ENCODE measurements at regions of chr4 and their contacts with region 1.

Region 1: DNA sequence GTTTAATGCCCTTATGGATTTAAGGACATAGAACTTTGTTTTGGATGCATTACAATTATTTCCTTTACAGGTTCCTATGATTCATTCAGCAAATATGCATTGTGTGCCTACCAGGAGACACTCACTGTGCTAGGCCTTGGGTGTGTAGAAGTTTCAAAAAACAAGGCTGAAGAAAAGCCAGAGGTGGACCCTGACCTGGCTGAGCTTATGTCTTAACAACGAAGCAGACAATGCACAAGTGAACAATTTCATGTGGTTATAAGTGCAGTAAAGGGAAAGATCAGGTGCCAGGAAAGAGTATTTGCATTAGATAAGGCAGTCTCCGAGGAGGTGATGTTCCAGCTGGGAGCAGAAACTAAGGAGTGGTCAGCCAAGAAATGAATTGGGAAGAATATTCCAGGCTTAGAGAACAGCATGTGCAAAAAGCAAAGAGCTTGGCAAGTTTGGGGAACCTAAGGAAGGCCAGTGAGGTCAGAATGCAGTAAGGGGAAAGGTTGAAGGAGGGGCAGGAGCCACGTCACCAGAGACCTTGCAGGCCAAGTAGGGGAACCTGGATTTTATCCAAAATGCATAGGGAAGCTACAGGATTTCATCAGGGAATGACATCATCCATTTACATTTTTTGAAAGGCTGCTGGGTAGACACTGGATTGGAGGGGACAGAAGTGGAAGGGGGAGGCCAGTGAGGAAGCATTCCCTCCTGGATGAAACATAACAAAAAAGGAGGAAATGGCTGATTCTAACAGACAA is 193.6 kb downstream of the SOWAHB start:
- DNase-seq: peak; percentile 88
- ATAC-seq: peak; percentile 81
- H3K4me3 ChIP-seq: peak overlapping the region; percentile 44; the same call in 1 of the 2 replicates
- H3K27ac ChIP-seq: peak overlapping the region; percentile 99
- H3K4me1 ChIP-seq: peaks cover 61% of the 10 kb centered on the region
- H3K27me3 ChIP-seq: no peaks in the 10 kb centered on the region
- CTCF ChIP-seq: no peak

Region 2: DNA sequence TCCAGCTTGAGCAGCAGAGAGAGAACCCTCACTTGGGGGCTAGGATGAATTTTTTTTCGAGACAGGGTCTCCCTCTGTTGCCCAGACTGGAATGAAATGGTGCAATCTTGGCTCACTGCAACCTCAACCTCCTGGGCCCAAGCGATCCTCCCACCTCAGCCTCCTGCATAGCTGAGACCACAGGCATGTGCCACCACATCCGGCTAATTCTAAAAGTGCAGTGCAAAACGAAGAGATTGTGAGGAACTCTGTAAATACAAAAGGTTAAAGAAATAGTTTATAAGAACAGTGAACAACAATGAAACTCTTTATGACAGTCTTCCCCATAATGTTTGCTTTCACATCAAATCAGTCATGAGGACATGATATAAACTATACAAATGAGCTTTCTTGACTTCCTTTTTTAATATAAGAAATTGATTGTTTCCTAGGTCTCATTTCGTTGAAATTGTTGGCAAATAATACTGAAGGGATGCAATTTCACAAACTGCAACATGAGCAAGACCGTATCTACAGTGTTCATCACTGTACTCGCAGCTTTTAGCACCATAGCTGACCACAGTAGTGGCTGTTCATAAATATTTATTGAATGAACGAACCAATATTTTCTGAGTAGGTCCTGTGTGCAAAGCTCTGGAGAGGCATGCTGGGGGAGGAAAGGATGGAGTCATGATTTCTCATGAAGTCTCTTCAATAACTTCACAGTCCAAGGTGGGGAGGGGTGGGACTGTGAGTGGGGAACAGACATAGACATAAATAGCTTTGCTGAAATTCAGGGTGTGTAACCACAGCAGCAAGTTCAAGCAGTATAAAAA is 153.1 kb before region 1 on chr4:
- CTCF ChIA-PET with region 1: interaction called, 3 read pairs
- POLR2A ChIA-PET with region 1: interaction called, 4 read pairs
- intact Hi-C with region 1: loop called (anchors 2 kb)
- DNase-seq: peak; percentile 70
- ATAC-seq: peak; percentile 61
- H3K4me3 ChIP-seq: no peak overlapping the region
- H3K27ac ChIP-seq: peak overlapping the region; percentile 69
- H3K4me1 ChIP-seq: peaks cover 23% of the 10 kb centered on the region
- H3K27me3 ChIP-seq: no peaks in the 10 kb centered on the region
- CTCF ChIP-seq: no peak

Region 3: GRCh38 chr4:76665139-76665538 is 39.2 kb before region 1 on chr4:
- CTCF ChIA-PET with region 1: no interaction called
- POLR2A ChIA-PET with region 1: interaction called, 4 read pairs
- intact Hi-C with region 1: loop called (anchors 1 kb)
- DNase-seq: peak; percentile 97
- ATAC-seq: peak; percentile 90
- H3K4me3 ChIP-seq: no peak overlapping the region
- H3K27ac ChIP-seq: peak overlapping the region; percentile 87
- H3K4me1 ChIP-seq: peaks cover 42% of the 10 kb centered on the region
- H3K27me3 ChIP-seq: no peaks in the 10 kb centered on the region
- CTCF ChIP-seq: no peak

Region 4: GRCh38 chr4:76723924-76724323 is 19.6 kb after region 1 on chr4:
- CTCF ChIA-PET with region 1: interaction called, 3 read pairs
- POLR2A ChIA-PET with region 1: no interaction called
- intact Hi-C with region 1: loop called (anchors 2 kb)
- DNase-seq: peak; percentile 64
- ATAC-seq: peak; percentile 84
- H3K4me3 ChIP-seq: no peak overlapping the region
- H3K27ac ChIP-seq: peak overlapping the region; percentile 64
- H3K4me1 ChIP-seq: peaks cover 32% of the 10 kb centered on the region
- H3K27me3 ChIP-seq: no peaks in the 10 kb centered on the region
- CTCF ChIP-seq: no peak

Measured in PC-3 (cell line).